Activated naive CD4-positive, alpha-beta T cell treated with anti-CD3 and anti-CD28 coated beads, Interleukin-2, amount 10 ng/mL, durations not matched to agents 7 days and 5 days (primary cell): ENCODE measurements at regions of chr4 and their contacts with region 1.

Region 1: DNA sequence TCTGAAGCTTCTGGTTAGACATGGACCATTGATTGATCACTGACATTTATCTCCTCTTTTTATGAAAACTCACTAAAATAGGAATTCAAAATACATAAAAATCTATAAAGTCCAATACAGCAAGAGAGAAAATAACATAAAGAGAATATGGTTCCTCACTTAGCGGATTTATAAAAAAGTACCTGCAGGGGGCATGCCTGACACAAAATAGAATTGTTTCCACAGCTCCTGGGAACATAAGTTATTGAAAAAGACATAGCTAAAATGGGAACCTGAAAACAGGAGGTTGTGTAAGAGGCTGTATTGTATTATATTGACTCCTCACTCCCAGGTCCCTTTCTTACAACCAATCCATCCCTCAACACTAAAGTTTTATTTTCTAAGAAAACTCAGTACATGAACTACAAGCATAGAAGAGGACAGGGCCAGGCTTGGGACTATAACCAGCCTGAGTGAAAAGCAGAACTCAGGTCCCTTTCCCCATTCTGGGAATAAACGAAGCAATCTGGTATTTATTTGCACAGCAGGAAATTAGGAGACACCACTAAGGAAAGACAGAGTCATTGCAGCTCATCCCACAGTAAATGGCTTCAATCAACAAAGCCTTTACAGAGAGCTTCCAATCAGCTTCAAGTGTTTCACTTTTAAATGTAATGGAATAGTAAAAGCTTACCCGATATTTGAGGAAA is 121.1 kb upstream of the NDST4 start:
- DNase-seq: no peak
- H3K4me3 Mint-ChIP-seq: no peak overlapping the region
- H3K27ac Mint-ChIP-seq: no peak overlapping the region
- H3K4me1 Mint-ChIP-seq: no peaks in the 10 kb centered on the region
- H3K27me3 Mint-ChIP-seq: no peaks in the 10 kb centered on the region

Region 2: DNA sequence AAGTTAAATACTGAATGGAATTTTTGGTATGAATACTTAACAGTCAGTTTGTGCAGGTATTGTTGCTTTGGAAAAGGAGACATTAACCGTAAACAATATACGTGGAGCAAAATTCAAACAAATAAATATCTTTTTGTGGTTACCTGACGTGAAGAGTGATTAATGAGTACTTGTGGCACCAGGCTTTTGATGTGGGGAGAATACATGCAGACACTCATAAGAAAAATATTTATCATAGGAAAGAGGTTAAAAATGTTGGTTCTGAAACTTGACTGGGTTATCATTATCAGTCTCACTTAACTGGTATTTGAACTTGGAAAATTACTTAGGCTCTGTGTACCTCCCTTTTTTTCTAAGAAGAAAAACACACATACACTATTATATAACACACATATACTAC is 15.3 kb after region 1 on chr4:
- CTCF ChIA-PET with region 1: no interaction called
- DNase-seq: no peak
- H3K4me3 Mint-ChIP-seq: no peak overlapping the region
- H3K27ac Mint-ChIP-seq: no peak overlapping the region
- H3K4me1 Mint-ChIP-seq: no peaks in the 10 kb centered on the region
- H3K27me3 Mint-ChIP-seq: no peaks in the 10 kb centered on the region

Region 3: GRCh38 chr4:115851918-115852766 is 617.6 kb after region 1 on chr4:
- CTCF ChIA-PET with region 1: interaction called, 10 read pairs
- DNase-seq: peak; percentile 31
- H3K4me3 Mint-ChIP-seq: no peak overlapping the region
- H3K27ac Mint-ChIP-seq: no peak overlapping the region
- H3K4me1 Mint-ChIP-seq: no peaks in the 10 kb centered on the region
- H3K27me3 Mint-ChIP-seq: no peaks in the 10 kb centered on the region